Sigmoid colon (tissue), 7 donors: ENCODE measurements at regions of chr6 and their contacts with region 1.

Region 1: DNA sequence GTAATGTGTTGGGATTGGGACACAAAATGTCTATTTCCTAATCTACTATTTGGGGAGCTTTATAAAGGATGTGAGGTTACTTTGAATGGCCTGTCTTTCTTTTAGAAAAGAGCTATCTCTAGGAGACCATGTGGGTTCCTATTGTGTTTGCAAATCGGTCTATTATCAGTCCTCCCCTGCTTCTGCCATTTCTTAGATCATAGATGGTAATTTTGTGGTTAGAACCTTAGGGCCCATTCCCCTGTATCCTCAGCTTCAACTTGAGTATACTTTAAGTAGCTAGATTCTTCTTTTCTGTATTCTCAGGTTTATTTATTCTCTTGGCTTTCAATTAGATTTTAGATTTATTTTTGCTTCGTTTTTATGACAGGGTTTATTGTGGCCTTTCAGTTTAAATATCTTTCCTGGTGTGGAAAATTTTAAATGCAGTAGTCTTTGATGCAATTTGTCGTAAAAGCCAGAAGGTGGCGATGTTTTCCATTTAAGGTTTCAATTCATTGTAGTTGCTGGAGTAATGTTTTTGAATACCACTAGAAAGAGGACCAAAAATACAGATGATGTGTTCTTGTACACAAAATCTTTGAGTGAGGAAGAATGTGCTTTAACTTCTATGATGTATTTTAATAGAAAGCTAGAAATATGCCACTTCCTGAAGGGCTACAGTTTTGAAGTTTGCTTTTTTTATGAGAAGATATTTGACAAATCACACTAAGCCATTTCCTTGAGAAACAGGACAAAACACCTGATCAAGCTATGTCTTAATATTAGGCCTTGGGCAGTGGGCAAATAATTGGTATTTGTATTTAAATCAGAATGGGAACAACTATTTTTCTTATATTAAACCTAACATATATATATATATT is 20.3 kb downstream of the TBPL1 start:
- DNase-seq: no peak
- H3K4me3 ChIP-seq: no peak overlapping the region
- H3K27ac ChIP-seq: peak overlapping the region in 3 of 4 donors; percentile 4 to 17 (median 5)
- H3K4me1 ChIP-seq: peaks cover 0 to 19% (median 17%) of the 10 kb centered on the region in 4 donors
- H3K27me3 ChIP-seq: no peaks in the 10 kb centered on the region
- CTCF ChIP-seq: peak; percentile 43 to 69 (median 68)
- EP300 ChIP-seq: no peak
- POLR2A ChIP-seq: no peak

Region 2: GRCh38 chr6:133991096-133991593 is 17.8 kb after region 1 on chr6:
- intact Hi-C with region 1: no loop called
- DNase-seq: no peak
- H3K4me3 ChIP-seq: no peak overlapping the region
- H3K27ac ChIP-seq: peak overlapping the region in 2 of 4 donors; percentile 22 to 44
- H3K4me1 ChIP-seq: peaks cover 0 to 32% (median 22%) of the 10 kb centered on the region in 4 donors
- H3K27me3 ChIP-seq: no peaks in the 10 kb centered on the region
- CTCF ChIP-seq: no peak
- EP300 ChIP-seq: no peak
- POLR2A ChIP-seq: no peak

Region 3: GRCh38 chr6:134063966-134064445 is 90.7 kb after region 1 on chr6:
- intact Hi-C with region 1: loop called (anchors 2 kb)
- DNase-seq: peak; percentile 79
- H3K4me3 ChIP-seq: no peak overlapping the region
- H3K27ac ChIP-seq: peak overlapping the region in 3 of 4 donors; percentile 50 to 76 (median 64)
- H3K4me1 ChIP-seq: peaks cover 0 to 34% (median 23%) of the 10 kb centered on the region in 4 donors
- H3K27me3 ChIP-seq: no peaks in the 10 kb centered on the region
- CTCF ChIP-seq: peak; percentile 59 to 83 (median 76)
- EP300 ChIP-seq: no peak
- POLR2A ChIP-seq: no peak